ENCODE measurements at regions of chr3 and their contacts with region 1.

Region 1: GRCh38 chr3:46488735-46489361 is 8.9 kb upstream of the RTP3 start:
- DNase-seq: peak; percentile 85
- ATAC-seq: peak; percentile 99
- H3K4me3 Mint-ChIP-seq: peak overlapping the region; percentile 29
- H3K27ac Mint-ChIP-seq: no peak overlapping the region
- H3K4me1 Mint-ChIP-seq: peaks cover 12% of the 10 kb centered on the region
- H3K27me3 Mint-ChIP-seq: peaks cover 2% of the 10 kb centered on the region
- CTCF ChIP-seq: peak; percentile 88

Region 2: DNA sequence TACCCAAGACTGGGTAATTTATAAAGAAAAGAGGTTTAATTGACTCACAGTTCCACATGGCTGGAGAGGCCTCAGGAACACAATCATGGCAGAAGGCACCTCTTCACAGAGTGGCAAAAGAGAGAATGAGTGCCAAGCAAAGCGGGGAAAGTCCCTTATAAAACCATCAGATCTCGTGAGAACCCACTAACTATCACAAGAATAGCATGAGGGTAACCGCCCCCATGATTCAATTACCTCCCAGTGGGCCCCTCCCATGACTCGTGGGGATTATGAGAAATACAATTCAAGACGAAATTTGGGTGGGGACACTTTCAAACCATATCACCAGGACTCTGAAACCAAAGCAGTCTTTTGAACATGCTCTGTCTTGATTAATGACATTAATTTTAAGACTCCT is 15.9 kb after region 1 on chr3:
- CTCF ChIA-PET with region 1: interaction called, 21 read pairs
- POLR2A ChIA-PET with region 1: no interaction called
- intact Hi-C with region 1: no loop called
- DNase-seq: no peak
- ATAC-seq: peak; percentile 77
- H3K4me3 Mint-ChIP-seq: no peak overlapping the region
- H3K27ac Mint-ChIP-seq: peak overlapping the region; percentile 65
- H3K4me1 Mint-ChIP-seq: peaks cover 43% of the 10 kb centered on the region
- H3K27me3 Mint-ChIP-seq: no peaks in the 10 kb centered on the region
- CTCF ChIP-seq: no peak

Region 3: DNA sequence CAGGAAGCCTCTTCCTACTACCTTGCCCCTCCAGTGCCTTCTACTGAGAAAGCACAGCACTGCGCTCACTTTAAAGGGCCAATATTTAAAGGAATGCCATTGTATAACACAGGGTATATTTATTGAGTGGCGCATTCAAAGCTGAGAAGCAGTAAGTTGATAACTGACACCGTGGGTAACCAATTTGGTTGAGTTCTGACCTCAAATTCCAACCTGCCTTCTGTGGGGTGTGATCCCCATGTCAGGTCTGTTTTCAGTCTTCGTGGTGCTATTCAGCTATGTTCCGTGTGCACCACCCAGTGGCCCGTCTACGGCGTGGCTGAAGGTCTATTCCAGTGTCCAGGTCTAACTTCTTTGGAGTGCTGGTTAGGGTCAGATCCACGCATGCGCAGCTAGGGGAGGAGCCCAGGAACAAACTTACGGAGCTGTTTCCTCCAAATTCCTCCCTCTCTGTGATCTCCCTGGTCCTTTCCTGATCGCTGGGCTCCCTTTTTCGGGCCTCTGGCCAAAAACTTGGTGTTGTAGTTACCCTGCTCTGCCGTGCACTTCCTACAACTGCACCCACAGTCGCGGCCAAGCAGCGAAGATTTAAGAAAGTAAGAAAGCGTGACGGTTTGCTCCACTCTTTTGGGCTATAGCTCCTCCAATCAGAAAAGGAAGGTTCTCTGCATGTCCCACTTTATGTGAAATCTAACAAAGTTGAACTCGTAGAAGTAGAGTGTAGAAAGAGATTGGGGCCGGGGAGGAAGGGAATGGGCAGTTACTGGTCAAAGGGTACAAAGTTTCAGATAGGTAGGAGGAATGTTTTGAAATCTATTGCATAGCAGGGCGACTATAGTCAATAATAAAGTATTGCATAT is 69.6 kb after region 1 on chr3:
- CTCF ChIA-PET with region 1: interaction called, 229 read pairs
- POLR2A ChIA-PET with region 1: interaction called, 15 read pairs
- intact Hi-C with region 1: loop called (anchors 1 kb)
- DNase-seq: peak; percentile 50
- ATAC-seq: peak; percentile 98
- H3K4me3 Mint-ChIP-seq: peak overlapping the region; percentile 61
- H3K27ac Mint-ChIP-seq: no peak overlapping the region
- H3K4me1 Mint-ChIP-seq: peaks cover 20% of the 10 kb centered on the region
- H3K27me3 Mint-ChIP-seq: peaks cover 1% of the 10 kb centered on the region
- CTCF ChIP-seq: no peak

Region 4: DNA sequence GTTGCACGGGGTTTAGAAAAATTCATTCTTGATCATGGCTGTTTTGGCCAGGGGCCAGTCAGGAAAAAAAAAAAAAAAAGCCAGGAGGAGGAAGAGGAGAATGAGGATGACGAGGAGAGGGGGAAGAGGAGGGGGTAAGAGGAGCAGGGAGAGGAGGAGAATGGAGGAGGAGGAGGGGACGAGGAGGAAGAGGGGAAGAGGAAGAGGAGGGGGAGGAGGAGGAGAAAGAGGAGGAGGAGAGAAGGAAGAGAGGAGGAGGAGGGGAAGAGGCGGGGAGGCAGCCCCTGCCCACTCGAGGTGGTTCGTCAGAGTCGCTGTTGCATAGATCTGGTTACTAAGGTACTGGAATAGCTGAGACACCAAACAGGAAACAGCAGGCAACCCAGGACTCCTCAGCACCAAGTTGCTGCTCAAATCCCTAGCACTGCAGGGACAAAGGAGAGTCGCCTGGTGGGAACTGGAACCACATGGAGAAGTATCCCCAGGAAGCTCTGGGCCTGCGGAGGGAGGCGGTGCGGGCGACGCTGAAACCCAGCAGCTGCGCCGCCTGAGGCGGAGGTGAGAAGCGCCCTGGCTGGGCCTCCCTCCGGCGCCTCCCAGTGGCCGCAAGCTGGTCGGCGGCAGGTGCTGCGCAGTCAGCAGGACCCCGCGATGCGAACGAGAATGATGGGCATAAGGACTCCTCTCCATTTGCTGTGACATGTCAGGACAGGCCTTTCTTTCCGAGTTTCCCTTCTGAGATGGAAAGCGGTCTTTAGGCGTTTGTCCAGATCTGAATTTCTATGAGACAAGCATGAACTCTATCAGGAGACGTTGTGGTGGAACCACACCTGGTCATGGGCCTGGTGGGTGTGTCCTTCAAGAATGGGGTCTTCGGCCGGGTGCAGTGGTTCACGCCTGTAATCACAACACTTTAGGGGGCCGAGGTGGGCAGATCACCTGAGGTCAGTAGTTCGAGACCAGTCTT is 141.0 kb after region 1 on chr3:
- CTCF ChIA-PET with region 1: interaction called, 205 read pairs
- POLR2A ChIA-PET with region 1: interaction called, 15 read pairs
- intact Hi-C with region 1: loop called (anchors 1 kb)
- DNase-seq: peak; percentile 73
- ATAC-seq: peak; percentile 98
- H3K4me3 Mint-ChIP-seq: peak overlapping the region; percentile 65
- H3K27ac Mint-ChIP-seq: peak overlapping the region; percentile 56
- H3K4me1 Mint-ChIP-seq: peaks cover 17% of the 10 kb centered on the region
- H3K27me3 Mint-ChIP-seq: peaks cover 2% of the 10 kb centered on the region
- CTCF ChIP-seq: peak; percentile 74

Region 5: DNA sequence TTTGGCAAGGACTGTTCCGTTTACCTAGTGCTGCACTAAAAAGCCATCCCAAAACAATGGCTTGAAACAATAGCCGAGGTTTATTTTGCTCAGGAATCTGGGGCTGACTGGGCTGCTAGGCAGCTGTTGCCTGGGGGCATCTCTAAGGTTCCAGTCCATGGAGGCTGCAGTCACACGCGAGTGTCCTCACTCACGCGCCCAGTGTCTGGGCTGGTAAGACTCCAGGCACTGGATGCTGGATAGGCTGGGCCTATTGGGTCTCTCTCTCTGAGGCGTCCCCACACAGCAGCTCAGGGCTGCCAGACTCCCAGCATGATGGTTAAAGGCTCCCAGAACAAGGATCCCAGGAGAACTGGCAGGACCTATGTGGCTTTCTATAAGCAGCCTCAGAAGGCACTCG is 170.4 kb after region 1 on chr3:
- CTCF ChIA-PET with region 1: no interaction called
- POLR2A ChIA-PET with region 1: no interaction called
- intact Hi-C with region 1: no loop called
- DNase-seq: no peak
- ATAC-seq: no peak
- H3K4me3 Mint-ChIP-seq: no peak overlapping the region
- H3K27ac Mint-ChIP-seq: no peak overlapping the region
- H3K4me1 Mint-ChIP-seq: peaks cover 15% of the 10 kb centered on the region
- H3K27me3 Mint-ChIP-seq: peaks cover 21% of the 10 kb centered on the region
- CTCF ChIP-seq: no peak

Region 6: DNA sequence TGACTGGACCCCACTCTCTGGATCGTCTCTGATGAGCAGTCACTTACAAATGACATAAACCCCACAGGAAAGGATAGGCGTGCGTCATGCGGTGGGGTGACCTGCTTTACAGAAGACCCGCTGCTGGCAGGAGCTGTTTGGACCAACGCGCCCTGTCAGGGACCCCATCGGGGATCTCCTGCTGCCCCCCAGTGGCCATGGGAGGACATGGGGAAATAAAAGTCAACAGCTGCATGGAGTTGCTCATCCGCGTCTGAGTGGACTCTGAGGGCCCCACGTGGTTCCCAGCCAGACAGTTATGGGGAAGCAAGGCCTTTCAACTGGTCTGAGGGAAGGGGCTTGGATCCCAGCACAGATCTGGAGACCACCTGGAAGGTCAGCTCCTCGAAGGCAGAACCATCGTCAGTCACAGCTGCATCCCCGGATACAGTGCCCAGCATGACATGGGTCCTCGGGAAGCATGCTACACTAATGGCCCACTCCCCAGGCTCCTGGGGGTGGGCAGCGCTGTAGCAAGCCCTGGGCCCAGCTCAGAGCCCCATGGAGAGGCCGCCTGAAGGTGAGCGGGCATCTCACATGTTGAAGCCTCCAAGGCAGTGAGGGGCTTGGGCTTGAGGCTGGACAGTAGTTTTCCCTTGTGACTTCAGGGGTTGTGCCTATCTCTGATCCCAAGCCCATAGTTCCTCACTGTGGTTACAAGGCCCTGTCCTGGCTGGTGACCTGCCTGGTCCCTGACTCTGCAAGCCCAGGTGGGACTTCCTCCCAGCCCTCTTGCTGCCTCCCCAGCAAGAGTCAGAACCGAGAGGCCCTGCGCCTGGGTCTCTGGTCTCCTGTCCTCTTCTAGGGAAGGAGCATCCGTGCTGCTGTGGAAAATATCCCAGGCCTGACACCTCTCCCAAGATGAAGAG is 420.9 kb after region 1 on chr3:
- CTCF ChIA-PET with region 1: no interaction called
- POLR2A ChIA-PET with region 1: no interaction called
- intact Hi-C with region 1: loop called (anchors 2 kb)
- DNase-seq: peak; percentile 68
- ATAC-seq: peak; percentile 91
- H3K4me3 Mint-ChIP-seq: no peak overlapping the region
- H3K27ac Mint-ChIP-seq: no peak overlapping the region
- H3K4me1 Mint-ChIP-seq: peaks cover 7% of the 10 kb centered on the region
- H3K27me3 Mint-ChIP-seq: no peaks in the 10 kb centered on the region
- CTCF ChIP-seq: peak; percentile 44

Region 7: DNA sequence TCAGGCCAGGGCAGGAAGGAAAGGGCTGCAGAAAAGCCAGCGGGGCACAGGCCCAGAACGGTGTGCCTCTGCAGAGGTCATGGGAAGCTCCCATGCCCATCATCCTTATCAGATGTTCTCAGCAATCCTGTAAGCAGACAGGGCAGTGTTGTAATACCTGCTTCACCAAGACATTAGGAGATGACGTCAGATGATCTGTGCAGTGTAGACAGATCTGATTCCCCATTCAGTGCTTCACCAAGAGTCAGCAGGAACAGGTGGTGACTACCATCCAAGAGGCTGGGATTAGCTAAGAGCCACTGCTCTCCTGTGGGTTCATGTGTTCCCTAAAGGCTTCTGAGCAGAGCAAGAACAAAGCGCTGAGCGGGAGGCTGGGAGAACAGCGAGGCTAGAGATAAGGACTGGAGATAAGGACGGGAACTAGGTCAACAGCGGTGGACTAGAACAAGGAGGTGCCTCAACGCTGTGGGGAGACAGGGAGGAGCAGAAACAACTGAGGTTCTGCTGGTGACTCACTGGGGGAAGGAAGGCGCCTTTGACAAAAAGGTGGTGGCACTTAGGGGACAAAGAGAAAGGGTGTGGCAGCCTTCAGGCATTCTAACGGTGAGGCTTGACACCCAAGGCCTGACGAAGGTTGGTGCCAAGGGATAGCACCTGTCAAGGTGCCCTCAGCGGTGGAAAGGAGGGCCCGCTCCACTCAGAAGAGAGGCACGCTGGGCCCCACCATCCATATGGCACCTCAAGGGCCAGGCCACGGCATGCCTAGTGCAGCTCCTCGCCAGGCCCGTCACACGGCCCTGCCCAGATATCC is 459.3 kb after region 1 on chr3:
- CTCF ChIA-PET with region 1: no interaction called
- POLR2A ChIA-PET with region 1: no interaction called
- intact Hi-C with region 1: no loop called
- DNase-seq: no peak
- ATAC-seq: no peak
- H3K4me3 Mint-ChIP-seq: peak overlapping the region; percentile 11
- H3K27ac Mint-ChIP-seq: peak overlapping the region; percentile 66
- H3K4me1 Mint-ChIP-seq: peaks cover 90% of the 10 kb centered on the region
- H3K27me3 Mint-ChIP-seq: no peaks in the 10 kb centered on the region
- CTCF ChIP-seq: no peak